HCT116 (cell line): ENCODE measurements at regions of chr1 and their contacts with region 1.

Region 1: GRCh38 chr1:63004868-63005267 is 220.9 kb downstream of the ATG4C start:
- DNase-seq: peak; percentile 7
- ATAC-seq: peak; percentile 82
- H3K4me3 ChIP-seq: no peak overlapping the region
- H3K27ac ChIP-seq: no peak overlapping the region
- H3K4me1 ChIP-seq: no peaks in the 10 kb centered on the region
- H3K27me3 ChIP-seq: peaks cover 23% of the 10 kb centered on the region
- CTCF ChIP-seq: peak; percentile 28 to 46 (median 43); a peak in 3 of 6 replicates
- POLR2A ChIP-seq: no peak
- RAD21 ChIP-seq: peak; percentile 77

Region 2: GRCh38 chr1:61005614-61006580 is 1999.0 kb before region 1 on chr1:
- CTCF ChIA-PET with region 1: no interaction called
- POLR2A ChIA-PET with region 1: no interaction called
- RAD21 ChIA-PET with region 1: no interaction called
- intact Hi-C with region 1: no loop called
- DNase-seq: no peak
- ATAC-seq: no peak
- H3K4me3 ChIP-seq: no peak overlapping the region
- H3K27ac ChIP-seq: no peak overlapping the region
- H3K4me1 ChIP-seq: no peaks in the 10 kb centered on the region
- H3K27me3 ChIP-seq: no peaks in the 10 kb centered on the region
- CTCF ChIP-seq: no peak
- POLR2A ChIP-seq: no peak
- RAD21 ChIP-seq: no peak

Region 3: GRCh38 chr1:63148825-63149645 is 144.2 kb after region 1 on chr1:
- CTCF ChIA-PET with region 1: interaction called, 17 read pairs
- POLR2A ChIA-PET with region 1: no interaction called
- RAD21 ChIA-PET with region 1: interaction called in 1 of 2 experiments, 5 read pairs
- intact Hi-C with region 1: no loop called
- DNase-seq: peak; percentile 40
- ATAC-seq: peak; percentile 97
- H3K4me3 ChIP-seq: no peak overlapping the region
- H3K27ac ChIP-seq: no peak overlapping the region
- H3K4me1 ChIP-seq: no peaks in the 10 kb centered on the region
- H3K27me3 ChIP-seq: peaks cover 45% of the 10 kb centered on the region
- CTCF ChIP-seq: peak; percentile 48 to 79 (median 79); a peak in 5 of 6 replicates
- POLR2A ChIP-seq: no peak
- RAD21 ChIP-seq: peak; percentile 65

Region 4: DNA sequence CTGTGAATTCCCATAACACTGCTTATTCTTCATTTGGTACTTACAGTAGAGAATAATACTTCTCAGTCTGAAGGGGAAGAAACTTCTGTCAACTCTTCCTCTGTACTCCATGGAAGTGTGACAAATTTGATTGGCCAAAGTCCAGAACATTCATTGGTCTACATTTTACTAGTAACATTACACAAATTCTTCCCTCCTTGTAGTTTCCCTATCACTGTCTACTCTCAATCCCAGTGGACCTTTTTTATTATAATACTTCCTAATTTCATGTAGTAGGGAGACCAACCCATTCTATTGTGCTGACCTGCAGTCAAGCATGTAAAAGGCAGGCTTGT is 437.2 kb after region 1 on chr1:
- CTCF ChIA-PET with region 1: interaction called, 8 read pairs
- POLR2A ChIA-PET with region 1: no interaction called
- RAD21 ChIA-PET with region 1: no interaction called
- intact Hi-C with region 1: loop called (anchors 1 kb)
- DNase-seq: no peak
- ATAC-seq: no peak
- H3K4me3 ChIP-seq: no peak overlapping the region
- H3K27ac ChIP-seq: no peak overlapping the region
- H3K4me1 ChIP-seq: no peaks in the 10 kb centered on the region
- H3K27me3 ChIP-seq: no peaks in the 10 kb centered on the region
- CTCF ChIP-seq: no peak
- POLR2A ChIP-seq: no peak
- RAD21 ChIP-seq: no peak

Region 5: GRCh38 chr1:63537940-63538339 is 533.1 kb after region 1 on chr1:
- CTCF ChIA-PET with region 1: interaction called, 9 read pairs
- POLR2A ChIA-PET with region 1: no interaction called
- RAD21 ChIA-PET with region 1: interaction called in 1 of 2 experiments, 4 read pairs
- intact Hi-C with region 1: loop called (anchors 5 kb)
- DNase-seq: no peak
- ATAC-seq: no peak
- H3K4me3 ChIP-seq: no peak overlapping the region
- H3K27ac ChIP-seq: no peak overlapping the region
- H3K4me1 ChIP-seq: no peaks in the 10 kb centered on the region
- H3K27me3 ChIP-seq: no peaks in the 10 kb centered on the region
- CTCF ChIP-seq: peak; percentile 15 to 60 (median 56); a peak in 2 of 6 replicates
- POLR2A ChIP-seq: no peak
- RAD21 ChIP-seq: peak; percentile 67